ENCODE measurements at regions of chr19 and their contacts with region 1.

Region 1: DNA sequence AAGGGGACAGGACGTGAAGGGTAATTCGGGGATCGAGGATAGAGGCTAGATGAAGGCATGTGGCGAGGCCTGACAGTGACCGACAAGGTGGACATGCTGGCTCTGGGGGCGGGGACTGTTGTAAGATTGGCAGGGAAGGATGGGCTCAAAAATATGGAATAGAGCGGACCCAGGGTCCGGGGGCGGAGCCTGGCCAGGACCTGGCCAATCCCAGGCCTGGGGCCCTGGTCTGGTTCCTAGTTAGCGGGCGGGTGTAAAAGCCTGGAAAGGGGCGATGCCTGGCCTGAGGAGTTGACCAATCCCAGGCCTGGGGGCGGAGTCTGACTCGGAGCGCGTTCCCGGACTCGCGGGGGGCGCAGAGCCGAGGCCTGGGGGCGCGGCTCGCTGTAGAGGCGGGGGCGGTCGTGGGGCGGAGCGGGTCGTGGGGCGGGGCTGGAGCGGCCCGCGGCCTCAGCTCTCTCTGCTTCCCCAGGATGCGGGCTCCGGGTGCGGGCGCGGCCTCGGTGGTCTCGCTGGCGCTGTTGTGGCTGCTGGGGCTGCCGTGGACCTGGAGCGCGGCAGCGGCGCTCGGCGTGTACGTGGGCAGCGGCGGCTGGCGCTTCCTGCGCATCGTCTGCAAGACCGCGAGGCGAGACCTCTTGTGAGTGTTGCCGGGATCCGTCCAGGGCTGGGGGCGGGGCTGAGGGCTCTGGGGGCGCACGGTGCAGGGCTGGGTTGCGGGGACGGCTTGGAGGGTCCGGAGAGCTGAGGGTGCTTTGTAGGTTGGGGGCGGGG is at the start of gene SLC27A1:
- DNase-seq: peak; percentile 99
- H3K4me3 ChIP-seq: peak within 1 kb of the TSS; percentile 75 to 85 (median 84)
- H3K27ac ChIP-seq: peak within 1 kb of the TSS; percentile 83
- H3K4me1 ChIP-seq: peaks cover 16% of the 10 kb centered on the region
- H3K27me3 ChIP-seq: no peaks in the 10 kb centered on the region
- CTCF ChIP-seq: no peak
- total RNA-seq, gene SLC27A1: 42.2 to 90.4 TPM

Region 2: DNA sequence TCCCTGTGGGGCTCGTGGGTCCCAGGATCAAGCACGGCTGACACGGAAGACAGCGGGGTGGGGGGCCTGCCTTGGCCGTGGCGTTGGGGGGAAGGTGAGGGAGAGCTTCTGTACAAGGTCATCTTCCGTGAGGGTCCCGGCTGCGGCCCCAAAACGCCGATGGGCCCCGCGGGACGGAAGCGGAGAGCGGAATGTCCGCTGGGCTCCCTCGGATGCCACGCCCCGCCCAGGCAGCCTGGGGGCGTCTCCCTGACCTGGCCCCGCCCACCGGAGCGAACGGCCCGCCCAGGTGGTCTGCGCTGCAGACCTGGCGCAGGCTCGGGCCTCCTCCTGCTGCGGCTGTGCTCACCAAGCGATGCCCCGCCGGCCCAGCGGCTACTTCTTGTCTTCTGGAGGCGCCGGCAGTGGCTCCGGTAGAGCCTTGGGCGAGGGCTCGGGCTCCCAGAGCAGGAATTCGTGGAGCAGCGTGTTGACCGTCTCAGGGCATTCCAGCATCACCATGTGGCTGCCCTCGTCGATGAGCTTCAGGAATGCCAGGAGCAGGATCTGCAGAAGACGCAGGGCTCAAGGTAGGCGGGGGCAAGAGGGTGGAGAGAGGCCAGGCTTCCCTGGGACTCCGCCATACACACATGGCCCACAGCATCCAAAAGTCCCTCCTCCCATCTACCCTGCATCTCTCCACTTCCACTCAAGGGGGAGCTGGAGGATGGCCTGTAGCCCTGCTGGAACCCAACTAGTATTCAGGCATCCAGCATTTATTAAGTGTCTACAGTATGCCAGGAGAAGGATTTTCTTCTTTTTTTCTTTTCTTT is 177.8 kb before region 1 on chr19:
- CTCF ChIA-PET with region 1: no interaction called
- dilution Hi-C with region 1: no loop called
- in situ Hi-C with region 1: no loop called
- intact Hi-C with region 1: loop called (anchors 1 kb)
- DNase-seq: peak; percentile 87
- H3K4me3 ChIP-seq: peak overlapping the region; percentile 46 to 65 (median 59)
- H3K27ac ChIP-seq: no peak overlapping the region
- H3K4me1 ChIP-seq: peaks cover 30% of the 10 kb centered on the region
- H3K27me3 ChIP-seq: no peaks in the 10 kb centered on the region
- CTCF ChIP-seq: peak; percentile 87 to 94

Region 3: GRCh38 chr19:17390665-17391370 is 79.4 kb before region 1 on chr19:
- CTCF ChIA-PET with region 1: no interaction called
- dilution Hi-C with region 1: no loop called
- in situ Hi-C with region 1: loop called in 1 of 2 experiments (anchors 5 kb)
- intact Hi-C with region 1: loop called (anchors 1 kb)
- DNase-seq: peak; percentile 85
- H3K4me3 ChIP-seq: peak overlapping the region; percentile 52 to 58 (median 54)
- H3K27ac ChIP-seq: no peak overlapping the region
- H3K4me1 ChIP-seq: peaks cover 15% of the 10 kb centered on the region
- H3K27me3 ChIP-seq: no peaks in the 10 kb centered on the region
- CTCF ChIP-seq: peak; percentile 54 to 76

Region 4: GRCh38 chr19:17441241-17442021 is 28.8 kb before region 1 on chr19:
- CTCF ChIA-PET with region 1: no interaction called
- dilution Hi-C with region 1: no loop called
- in situ Hi-C with region 1: no loop called
- intact Hi-C with region 1: loop called (anchors 1 kb)
- DNase-seq: peak; percentile 16
- H3K4me3 ChIP-seq: no peak overlapping the region
- H3K27ac ChIP-seq: no peak overlapping the region
- H3K4me1 ChIP-seq: no peaks in the 10 kb centered on the region
- H3K27me3 ChIP-seq: no peaks in the 10 kb centered on the region
- CTCF ChIP-seq: peak; percentile 45 to 49

Region 5: DNA sequence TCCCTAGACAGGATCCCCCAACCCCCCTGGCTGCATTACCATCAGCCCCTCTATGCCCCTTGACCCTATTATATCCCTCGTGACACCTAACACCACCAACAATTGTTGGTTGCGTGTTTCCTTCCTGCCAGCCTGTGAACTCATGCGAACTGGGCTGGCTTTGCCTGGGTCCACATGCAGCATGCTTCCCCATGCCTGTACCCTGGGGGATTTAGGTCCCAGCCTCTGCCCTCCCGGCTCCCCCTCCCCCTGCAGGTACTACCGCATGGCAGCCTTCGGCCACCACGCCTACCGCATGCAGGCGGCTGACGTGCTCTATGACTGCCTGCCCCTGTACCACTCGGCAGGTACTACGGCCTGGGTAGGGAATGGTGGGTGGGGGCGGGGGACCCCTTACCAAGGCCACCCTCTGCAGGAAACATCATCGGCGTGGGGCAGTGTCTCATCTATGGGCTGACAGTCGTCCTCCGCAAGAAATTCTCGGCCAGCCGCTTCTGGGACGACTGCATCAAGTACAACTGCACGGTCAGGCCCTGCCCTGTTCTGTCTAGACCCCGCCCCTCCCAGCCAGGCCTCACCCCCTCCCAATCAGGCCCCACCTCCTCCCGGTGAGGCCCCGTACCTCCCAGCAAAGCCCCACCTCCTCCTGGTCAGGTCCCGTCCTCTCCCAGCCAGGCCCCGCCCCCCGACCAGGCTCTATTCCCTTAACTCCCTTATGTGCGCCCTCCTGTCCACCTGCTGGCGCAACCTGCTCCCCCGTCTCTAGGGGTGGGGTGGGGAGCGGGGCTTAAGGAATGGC is 18.5 kb after region 1 on chr19:
- CTCF ChIA-PET with region 1: no interaction called
- dilution Hi-C with region 1: no loop called
- in situ Hi-C with region 1: no loop called
- intact Hi-C with region 1: no loop called
- DNase-seq: peak; percentile 43
- H3K4me3 ChIP-seq: no peak overlapping the region
- H3K27ac ChIP-seq: no peak overlapping the region
- H3K4me1 ChIP-seq: peaks cover 11% of the 10 kb centered on the region
- H3K27me3 ChIP-seq: no peaks in the 10 kb centered on the region
- CTCF ChIP-seq: peak in 1 of 2 donors; percentile 29

Region 6: GRCh38 chr19:17511724-17512573 is 41.7 kb after region 1 on chr19:
- CTCF ChIA-PET with region 1: no interaction called
- dilution Hi-C with region 1: no loop called
- in situ Hi-C with region 1: no loop called
- intact Hi-C with region 1: loop called (anchors 1 kb)
- DNase-seq: peak; percentile 71
- H3K4me3 ChIP-seq: peak overlapping the region; percentile 52 to 84 (median 81)
- H3K27ac ChIP-seq: peak overlapping the region; percentile 80
- H3K4me1 ChIP-seq: peaks cover 32% of the 10 kb centered on the region
- H3K27me3 ChIP-seq: no peaks in the 10 kb centered on the region
- CTCF ChIP-seq: peak in 1 of 2 donors; percentile 32

Measured in mammary epithelial cell (primary cell).